B cell (primary cell): ENCODE measurements at regions of chr2 and their contacts with region 1.

Region 1: GRCh38 chr2:102240640-102241370 is 54.0 kb downstream of the IL1RL2 start:
- DNase-seq: peak; percentile 88
- ATAC-seq: peak; percentile 89
- H3K4me3 ChIP-seq: peak overlapping the region in 1 of 5 experiments; percentile 11
- H3K4me3 Mint-ChIP-seq: peak overlapping the region; percentile 40
- H3K27ac ChIP-seq: no peak overlapping the region
- H3K27ac Mint-ChIP-seq: peak overlapping the region; percentile 4
- H3K4me1 ChIP-seq: peaks cover 7 to 16% of the 10 kb centered on the region in 2 donors
- H3K4me1 Mint-ChIP-seq: peaks cover 24% of the 10 kb centered on the region
- H3K27me3 ChIP-seq: peaks cover 0 to 3% (median 3%) of the 10 kb centered on the region in 4 experiments
- H3K27me3 Mint-ChIP-seq: peaks cover 17% of the 10 kb centered on the region
- CTCF ChIP-seq: peak; percentile 98

Region 2: GRCh38 chr2:101419096-101419663 is 821.6 kb before region 1 on chr2:
- CTCF ChIA-PET with region 1: interaction called, 13 read pairs
- POLR2A ChIA-PET with region 1: no interaction called
- intact Hi-C with region 1: loop called (anchors 1 kb)
- DNase-seq: peak; percentile 78
- ATAC-seq: peak; percentile 82
- H3K4me3 ChIP-seq: no peak overlapping the region
- H3K4me3 Mint-ChIP-seq: no peak overlapping the region
- H3K27ac ChIP-seq: no peak overlapping the region
- H3K27ac Mint-ChIP-seq: no peak overlapping the region
- H3K4me1 ChIP-seq: no peaks in the 10 kb centered on the region
- H3K4me1 Mint-ChIP-seq: no peaks in the 10 kb centered on the region
- H3K27me3 ChIP-seq: peaks cover 0 to 5% (median 0%) of the 10 kb centered on the region in 4 experiments
- H3K27me3 Mint-ChIP-seq: peaks cover 8% of the 10 kb centered on the region
- CTCF ChIP-seq: peak; percentile 88

Region 3: GRCh38 chr2:101883863-101884262 is 356.9 kb before region 1 on chr2:
- CTCF ChIA-PET with region 1: interaction called, 86 read pairs
- POLR2A ChIA-PET with region 1: no interaction called
- intact Hi-C with region 1: no loop called
- DNase-seq: peak; percentile 55
- ATAC-seq: no peak
- H3K4me3 ChIP-seq: no peak overlapping the region
- H3K4me3 Mint-ChIP-seq: no peak overlapping the region
- H3K27ac ChIP-seq: no peak overlapping the region
- H3K27ac Mint-ChIP-seq: peak overlapping the region; percentile 20
- H3K4me1 ChIP-seq: no peaks in the 10 kb centered on the region
- H3K4me1 Mint-ChIP-seq: peaks cover 2% of the 10 kb centered on the region
- H3K27me3 ChIP-seq: no peaks in the 10 kb centered on the region
- H3K27me3 Mint-ChIP-seq: no peaks in the 10 kb centered on the region
- CTCF ChIP-seq: peak; percentile 78

Region 4: GRCh38 chr2:102013206-102014040 is 227.4 kb before region 1 on chr2:
- CTCF ChIA-PET with region 1: interaction called, 30 read pairs
- POLR2A ChIA-PET with region 1: no interaction called
- intact Hi-C with region 1: no loop called
- DNase-seq: no peak
- ATAC-seq: no peak
- H3K4me3 ChIP-seq: no peak overlapping the region
- H3K4me3 Mint-ChIP-seq: no peak overlapping the region
- H3K27ac ChIP-seq: no peak overlapping the region
- H3K27ac Mint-ChIP-seq: no peak overlapping the region
- H3K4me1 ChIP-seq: peaks cover 0 to 5% of the 10 kb centered on the region in 2 donors
- H3K4me1 Mint-ChIP-seq: peaks cover 9% of the 10 kb centered on the region
- H3K27me3 ChIP-seq: no peaks in the 10 kb centered on the region
- H3K27me3 Mint-ChIP-seq: no peaks in the 10 kb centered on the region
- CTCF ChIP-seq: no peak

Region 5: GRCh38 chr2:102251042-102251848 is 10.4 kb after region 1 on chr2:
- CTCF ChIA-PET with region 1: interaction called, 25 read pairs
- POLR2A ChIA-PET with region 1: no interaction called
- intact Hi-C with region 1: no loop called
- DNase-seq: peak; percentile 65
- ATAC-seq: peak; percentile 57
- H3K4me3 ChIP-seq: peak overlapping the region in 4 of 5 experiments; percentile 17 to 49 (median 40)
- H3K4me3 Mint-ChIP-seq: peak overlapping the region; percentile 77
- H3K27ac ChIP-seq: no peak overlapping the region
- H3K27ac Mint-ChIP-seq: no peak overlapping the region
- H3K4me1 ChIP-seq: peaks cover 8 to 12% of the 10 kb centered on the region in 2 donors
- H3K4me1 Mint-ChIP-seq: peaks cover 9% of the 10 kb centered on the region
- H3K27me3 ChIP-seq: peaks cover 0 to 28% (median 7%) of the 10 kb centered on the region in 4 experiments
- H3K27me3 Mint-ChIP-seq: peaks cover 35% of the 10 kb centered on the region
- CTCF ChIP-seq: peak; percentile 70